ENCODE measurements at regions of chr6 and their contacts with region 1.

Region 1: DNA sequence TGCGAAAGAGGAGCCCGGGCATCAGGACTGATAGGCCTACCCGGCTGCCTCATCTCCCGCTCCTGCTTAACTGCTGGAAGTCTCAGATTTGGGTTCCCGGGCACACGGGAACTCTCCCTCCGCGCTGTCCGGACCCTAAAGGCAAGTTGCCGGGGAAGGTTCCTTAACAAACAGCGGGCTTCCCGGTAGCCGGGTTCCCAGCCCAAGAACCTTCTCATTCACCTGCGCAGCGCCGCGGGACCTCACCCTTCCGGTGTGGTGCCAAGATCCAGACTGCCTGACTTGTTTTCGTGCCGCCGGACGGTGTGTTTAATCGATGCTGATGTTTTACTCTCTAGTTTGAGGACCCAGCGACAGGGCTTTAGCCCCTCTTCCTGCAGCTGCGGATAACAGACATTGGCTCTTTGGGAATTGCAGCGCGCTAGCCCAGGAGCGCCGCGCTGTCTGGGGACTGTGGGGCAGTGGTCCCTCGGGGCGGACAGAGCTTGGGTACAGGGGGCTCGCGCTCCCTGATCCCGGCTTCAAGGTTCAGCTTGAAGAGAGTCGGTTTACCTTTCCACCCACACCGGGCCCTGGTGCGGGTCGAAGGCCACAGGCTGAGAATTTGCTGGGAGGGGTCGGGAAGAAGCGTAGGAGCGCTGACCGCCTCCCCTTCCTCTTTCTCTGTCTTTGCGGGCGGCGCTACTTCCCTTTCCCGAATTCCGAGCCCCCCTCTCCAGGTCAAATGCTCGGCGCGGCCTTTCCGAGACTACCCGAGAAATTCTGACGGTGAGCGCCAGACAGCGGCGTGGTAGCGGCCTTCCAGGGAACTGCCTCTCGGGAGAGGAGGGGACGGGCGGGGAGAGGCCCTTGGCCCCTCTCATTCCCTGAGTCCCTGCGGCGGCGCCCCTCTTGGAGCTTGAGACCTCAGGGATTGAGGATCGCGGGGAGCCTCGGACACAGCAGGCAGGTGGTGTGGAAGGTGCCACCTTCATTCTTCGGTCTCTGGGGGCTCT is 17.2 kb downstream of the ABT1 start:
- DNase-seq: peak in 1 of 2 donors; percentile 15
- H3K4me3 ChIP-seq: peak overlapping the region in 1 of 3 donors; percentile 6
- H3K27ac ChIP-seq: no peak overlapping the region
- H3K4me1 ChIP-seq: peaks cover 5 to 13% of the 10 kb centered on the region in 2 donors
- H3K27me3 ChIP-seq: peaks cover 6% of the 10 kb centered on the region
- CTCF ChIP-seq: no peak
- POLR2A ChIP-seq: no peak

Region 2: DNA sequence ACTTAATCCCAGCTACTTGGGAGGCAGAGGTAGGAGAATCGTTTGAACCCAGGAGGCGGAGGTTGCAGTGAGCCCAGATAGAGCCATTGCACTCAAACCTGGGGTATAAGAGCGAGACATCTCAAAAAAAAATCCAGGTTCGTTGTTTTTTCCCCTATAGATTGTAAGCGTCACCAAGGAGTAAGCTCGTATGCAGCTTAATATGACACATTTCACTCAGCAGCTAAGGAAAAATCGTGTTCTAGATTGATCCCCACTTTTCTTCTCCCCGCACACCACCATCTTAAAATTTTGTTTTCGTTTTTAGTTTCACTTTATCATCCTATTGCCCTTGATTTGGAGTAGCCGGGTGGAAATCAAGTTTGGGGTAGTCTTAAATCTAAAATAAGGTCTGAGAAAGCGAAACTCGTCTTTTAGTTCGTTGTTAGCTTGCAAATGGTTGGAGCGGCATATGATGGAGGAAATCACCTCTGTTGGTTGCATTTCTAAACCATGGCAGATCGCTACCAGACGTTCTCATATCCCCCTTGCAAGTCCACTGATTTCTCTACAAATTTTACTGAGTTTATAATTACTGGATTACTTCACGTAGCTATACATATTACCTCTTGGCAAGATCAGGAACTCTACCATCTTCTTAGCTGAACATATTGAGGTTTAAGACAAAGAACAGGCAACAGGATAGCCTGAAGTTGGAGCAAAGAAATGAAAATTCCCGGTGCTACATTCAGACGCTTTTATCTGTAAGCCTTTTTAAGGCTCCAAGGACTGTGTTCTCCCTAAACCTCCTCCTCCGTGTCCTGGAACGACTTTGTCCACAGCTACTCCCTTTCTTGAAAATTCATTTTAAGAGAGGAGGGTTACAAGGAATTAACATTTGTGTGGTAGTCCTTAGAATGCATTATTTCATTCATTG is 340.1 kb before region 1 on chr6:
- intact Hi-C with region 1: no loop called
- DNase-seq: no peak
- H3K4me3 ChIP-seq: peak overlapping the region in 2 of 3 donors; percentile 34 to 37
- H3K27ac ChIP-seq: peak overlapping the region; percentile 83 to 97 (median 88)
- H3K4me1 ChIP-seq: peaks cover 5 to 6% of the 10 kb centered on the region in 2 donors
- H3K27me3 ChIP-seq: no peaks in the 10 kb centered on the region
- CTCF ChIP-seq: no peak
- POLR2A ChIP-seq: no peak

Region 3: GRCh38 chr6:26445934-26446667 is 167.9 kb before region 1 on chr6:
- intact Hi-C with region 1: no loop called
- DNase-seq: no peak
- H3K4me3 ChIP-seq: no peak overlapping the region
- H3K27ac ChIP-seq: no peak overlapping the region
- H3K4me1 ChIP-seq: peaks cover 5 to 8% of the 10 kb centered on the region in 2 donors
- H3K27me3 ChIP-seq: no peaks in the 10 kb centered on the region
- CTCF ChIP-seq: no peak
- POLR2A ChIP-seq: no peak

Region 4: DNA sequence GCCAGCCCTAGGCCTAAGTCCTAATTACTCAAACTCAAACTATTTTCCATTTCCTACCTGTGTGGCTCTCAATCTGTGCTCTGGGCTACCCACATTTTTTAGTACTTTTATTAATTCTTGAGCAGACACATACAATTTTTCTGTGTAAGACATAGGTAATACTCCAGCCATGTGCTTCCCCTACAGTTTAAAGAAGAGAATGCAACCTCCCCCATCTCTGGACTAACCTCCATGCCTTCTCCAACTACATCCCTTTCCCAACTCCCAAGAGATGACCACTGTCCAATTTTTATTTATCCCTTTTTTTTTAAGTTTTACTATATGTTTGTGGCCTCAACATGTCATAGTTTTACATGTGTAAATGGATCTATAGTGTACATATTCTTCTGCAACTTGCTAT is 70.0 kb before region 1 on chr6:
- intact Hi-C with region 1: no loop called
- DNase-seq: no peak
- H3K4me3 ChIP-seq: no peak overlapping the region
- H3K27ac ChIP-seq: no peak overlapping the region
- H3K4me1 ChIP-seq: peaks cover 4 to 9% of the 10 kb centered on the region in 2 donors
- H3K27me3 ChIP-seq: no peaks in the 10 kb centered on the region
- CTCF ChIP-seq: peak in 2 of 6 experiments; percentile 7 to 18
- POLR2A ChIP-seq: no peak

Region 5: DNA sequence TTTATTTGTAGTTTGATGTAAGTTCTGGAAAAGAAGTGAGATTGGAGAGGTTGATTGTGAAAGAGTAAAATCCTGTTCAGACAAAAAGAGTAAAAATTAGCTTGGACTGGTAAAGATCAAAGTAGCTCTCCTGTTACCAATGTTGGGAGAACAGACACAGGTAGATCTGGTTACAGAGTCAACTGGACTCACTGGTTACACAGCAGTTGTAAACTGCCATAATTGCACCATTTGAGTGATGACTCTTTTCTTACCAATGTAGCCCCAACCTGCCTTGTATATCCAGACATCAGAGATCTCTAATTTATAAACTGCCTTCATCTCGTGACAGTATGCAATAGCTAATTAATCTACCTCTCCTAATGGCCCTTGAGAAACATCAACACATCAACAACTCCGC is 467.9 kb after region 1 on chr6:
- intact Hi-C with region 1: loop called (anchors 10 kb)
- DNase-seq: no peak
- H3K4me3 ChIP-seq: no peak overlapping the region
- H3K27ac ChIP-seq: no peak overlapping the region
- H3K4me1 ChIP-seq: peaks cover 0 to 3% of the 10 kb centered on the region in 2 donors
- H3K27me3 ChIP-seq: peaks cover 3% of the 10 kb centered on the region
- CTCF ChIP-seq: no peak
- POLR2A ChIP-seq: no peak

Measured in thyroid gland (tissue), 4 donors.